Activated B cell treated with CpG ODN at 0.5 μM for 24 hours (primary cell): ENCODE measurements at regions of chr7 and their contacts with region 1.

Region 1: GRCh38 chr7:18495412-18496340 is at the start of gene HDAC9:
- DNase-seq: peak; percentile 33
- ATAC-seq: peak; percentile 88
- H3K4me3 Mint-ChIP-seq: peak within 1 kb of the TSS; percentile 95
- H3K27ac Mint-ChIP-seq: peak within 1 kb of the TSS; percentile 95
- H3K4me1 Mint-ChIP-seq: peaks cover 53% of the 10 kb centered on the region
- H3K27me3 Mint-ChIP-seq: no peaks in the 10 kb centered on the region
- CTCF ChIP-seq: no peak
- total RNA-seq, gene HDAC9: 136 and 149 TPM in 2 replicates

Region 2: GRCh38 chr7:17940302-17940883 is 555.3 kb before region 1 on chr7 and contains the start of gene SNX13:
- CTCF ChIA-PET with region 1: no interaction called
- POLR2A ChIA-PET with region 1: no interaction called
- intact Hi-C with region 1: loop called (anchors 10 kb)
- DNase-seq: peak; percentile 84
- ATAC-seq: peak; percentile 91
- H3K4me3 Mint-ChIP-seq: peak within 1 kb of the TSS; percentile 98
- H3K27ac Mint-ChIP-seq: peak within 1 kb of the TSS; percentile 98
- H3K4me1 Mint-ChIP-seq: peaks cover 44% of the 10 kb centered on the region
- H3K27me3 Mint-ChIP-seq: no peaks in the 10 kb centered on the region
- CTCF ChIP-seq: no peak
- total RNA-seq, gene SNX13: 40.0 and 46.5 TPM in 2 replicates

Region 3: GRCh38 chr7:18520450-18521235 is 25.0 kb after region 1 on chr7:
- CTCF ChIA-PET with region 1: interaction called, 3 read pairs
- POLR2A ChIA-PET with region 1: interaction called, 71 read pairs
- intact Hi-C with region 1: loop called (anchors 1 kb)
- DNase-seq: no peak
- ATAC-seq: peak; percentile 86
- H3K4me3 Mint-ChIP-seq: peak overlapping the region; percentile 78
- H3K27ac Mint-ChIP-seq: peak overlapping the region; percentile 97
- H3K4me1 Mint-ChIP-seq: peaks cover 82% of the 10 kb centered on the region
- H3K27me3 Mint-ChIP-seq: no peaks in the 10 kb centered on the region
- CTCF ChIP-seq: no peak

Region 4: GRCh38 chr7:18570890-18571478 is 75.3 kb after region 1 on chr7:
- CTCF ChIA-PET with region 1: interaction called, 32 read pairs
- POLR2A ChIA-PET with region 1: interaction called, 30 read pairs
- intact Hi-C with region 1: loop called (anchors 1 kb)
- DNase-seq: no peak
- ATAC-seq: no peak
- H3K4me3 Mint-ChIP-seq: no peak overlapping the region
- H3K27ac Mint-ChIP-seq: peak overlapping the region; percentile 50
- H3K4me1 Mint-ChIP-seq: peaks cover 71% of the 10 kb centered on the region
- H3K27me3 Mint-ChIP-seq: no peaks in the 10 kb centered on the region
- CTCF ChIP-seq: no peak

Region 5: DNA sequence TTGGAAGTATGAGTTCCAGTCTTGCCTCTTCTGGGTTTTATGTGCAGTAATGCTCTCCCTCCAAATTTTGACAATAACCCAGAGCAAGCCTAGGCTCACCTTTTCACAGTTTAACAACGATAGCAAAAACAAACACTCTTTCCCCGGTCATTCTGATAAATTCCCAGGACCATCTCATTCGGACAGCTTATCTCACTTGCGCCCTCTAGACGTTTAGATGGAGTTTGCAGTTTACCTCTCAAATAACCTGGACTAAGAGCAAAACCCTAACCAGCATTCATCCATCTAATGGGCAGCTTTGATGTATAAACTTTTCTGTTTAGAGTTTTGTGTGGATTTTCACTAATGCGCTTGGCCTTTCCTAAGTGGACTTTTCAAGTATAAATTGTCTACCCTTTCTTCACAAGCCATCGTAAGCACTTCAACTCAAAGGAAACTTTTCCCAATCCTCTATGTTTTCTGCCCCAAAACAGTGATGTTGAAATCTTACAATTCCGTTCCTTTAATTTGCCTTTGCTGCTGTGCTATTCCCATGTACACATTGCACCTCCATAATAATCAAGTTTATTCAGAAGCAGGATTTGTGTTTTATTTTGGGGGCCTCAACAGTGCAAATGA is 114.8 kb after region 1 on chr7:
- CTCF ChIA-PET with region 1: interaction called, 3 read pairs
- POLR2A ChIA-PET with region 1: no interaction called
- intact Hi-C with region 1: loop called (anchors 1 kb)
- DNase-seq: no peak
- ATAC-seq: peak; percentile 37
- H3K4me3 Mint-ChIP-seq: no peak overlapping the region
- H3K27ac Mint-ChIP-seq: no peak overlapping the region
- H3K4me1 Mint-ChIP-seq: peaks cover 4% of the 10 kb centered on the region
- H3K27me3 Mint-ChIP-seq: no peaks in the 10 kb centered on the region
- CTCF ChIP-seq: no peak

Region 6: GRCh38 chr7:19728716-19729115 is 1233.0 kb after region 1 on chr7:
- CTCF ChIA-PET with region 1: no interaction called
- POLR2A ChIA-PET with region 1: no interaction called
- intact Hi-C with region 1: no loop called
- DNase-seq: no peak
- ATAC-seq: no peak
- H3K4me3 Mint-ChIP-seq: no peak overlapping the region
- H3K27ac Mint-ChIP-seq: no peak overlapping the region
- H3K4me1 Mint-ChIP-seq: no peaks in the 10 kb centered on the region
- H3K27me3 Mint-ChIP-seq: peaks cover 23% of the 10 kb centered on the region
- CTCF ChIP-seq: no peak